Keratinocyte (primary cell): ENCODE measurements at regions of chr9 and their contacts with region 1.

Region 1: DNA sequence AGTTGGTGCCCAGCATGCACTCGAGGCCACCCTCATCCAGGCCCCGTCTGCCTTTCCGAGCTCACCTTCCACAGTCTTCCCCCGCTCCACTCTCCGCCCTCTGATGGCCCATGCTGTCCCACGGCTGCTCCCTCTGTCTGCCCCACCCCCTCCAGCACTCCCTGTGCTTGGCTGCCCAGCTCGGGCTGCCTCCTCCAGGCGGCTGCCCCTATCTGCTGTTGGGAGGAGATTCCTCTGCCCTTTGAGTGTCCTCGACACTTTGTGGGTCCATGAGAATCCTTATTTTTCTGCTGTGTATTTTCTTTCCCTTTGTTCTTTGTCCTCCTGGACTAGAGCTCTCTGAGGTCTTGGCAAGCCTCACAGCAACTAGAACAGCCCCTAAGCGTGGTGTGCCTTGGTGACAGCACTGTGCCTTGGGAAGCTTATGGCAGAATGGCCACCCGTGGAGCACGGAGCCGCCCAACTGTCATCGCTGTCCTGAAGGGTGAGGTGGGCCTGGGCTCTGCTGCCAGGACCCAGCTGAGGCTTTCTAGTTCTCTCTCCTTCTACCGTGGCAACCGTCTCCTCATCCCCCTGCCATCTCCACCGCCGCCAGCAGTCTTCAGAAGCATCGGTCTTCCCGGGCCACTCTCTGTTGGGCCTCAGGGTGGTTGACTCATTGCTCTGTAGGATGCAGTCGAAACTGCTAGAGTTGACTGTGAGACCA is 5.2 kb downstream of the NTMT1 start:
- DNase-seq: no peak
- H3K4me3 ChIP-seq: no peak overlapping the region
- H3K27ac ChIP-seq: no peak overlapping the region
- H3K4me1 ChIP-seq: peaks cover 31% of the 10 kb centered on the region
- H3K27me3 ChIP-seq: no peaks in the 10 kb centered on the region
- CTCF ChIP-seq: peak in 1 of 3 experiments; percentile 22

Region 2: DNA sequence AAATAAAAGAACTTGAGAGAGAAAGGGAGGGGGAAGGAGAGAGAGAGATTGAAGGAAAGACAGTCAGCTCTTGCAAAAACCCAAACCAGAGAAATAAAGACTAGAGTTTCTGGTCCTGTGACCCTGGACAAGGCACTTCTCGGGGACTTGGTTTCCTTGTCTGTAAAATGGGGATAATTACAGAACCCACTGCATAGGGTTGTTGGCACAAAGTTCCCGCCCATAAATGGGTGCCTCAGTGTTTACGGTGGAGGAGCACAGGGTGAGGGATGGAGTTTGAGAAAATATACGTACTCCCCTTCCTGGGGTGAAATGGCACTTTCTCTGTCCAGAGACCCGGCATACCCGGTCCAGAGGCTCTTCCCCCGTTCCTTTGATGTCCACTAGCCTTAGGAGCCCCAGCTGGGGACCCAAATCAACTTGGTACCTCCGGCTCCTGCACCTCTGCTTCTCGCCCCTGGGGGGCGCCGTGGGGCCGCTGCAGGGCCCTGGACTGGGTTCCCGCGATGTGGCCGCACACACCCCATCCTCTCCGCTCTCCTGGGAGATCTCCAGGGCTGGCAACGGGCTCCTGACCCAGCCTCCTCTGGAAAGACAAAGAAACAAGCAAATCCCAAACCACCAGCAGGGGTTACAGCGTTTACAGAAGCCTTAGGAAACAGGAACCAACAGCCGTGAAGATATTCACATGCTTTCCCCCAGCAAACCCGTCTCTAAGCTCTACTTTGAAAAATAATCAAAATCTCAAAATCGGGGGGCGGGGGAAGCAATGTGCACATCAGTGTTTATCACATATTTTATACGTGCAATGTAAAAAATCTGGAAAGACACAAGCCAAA is 95.4 kb after region 1 on chr9:
- dilution Hi-C with region 1: loop called (anchors 10 kb)
- DNase-seq: peak; percentile 28
- H3K4me3 ChIP-seq: no peak overlapping the region
- H3K27ac ChIP-seq: no peak overlapping the region
- H3K4me1 ChIP-seq: peaks cover 5% of the 10 kb centered on the region
- H3K27me3 ChIP-seq: no peaks in the 10 kb centered on the region
- CTCF ChIP-seq: peak; percentile 77 to 99 (median 88)